ENCODE measurements at regions of chr9 and their contacts with region 1.

Region 1: GRCh38 chr9:128296337-128297220 is 20.5 kb downstream of the SWI5 start:
- DNase-seq: no peak
- H3K4me3 ChIP-seq: no peak overlapping the region
- CTCF ChIP-seq: no peak

Region 2: GRCh38 chr9:127987103-127987614 is 309.4 kb before region 1 on chr9:
- CTCF ChIA-PET with region 1: no interaction called
- POLR2A ChIA-PET with region 1: no interaction called
- DNase-seq: no peak
- H3K4me3 ChIP-seq: no peak overlapping the region
- CTCF ChIP-seq: no peak

Region 3: DNA sequence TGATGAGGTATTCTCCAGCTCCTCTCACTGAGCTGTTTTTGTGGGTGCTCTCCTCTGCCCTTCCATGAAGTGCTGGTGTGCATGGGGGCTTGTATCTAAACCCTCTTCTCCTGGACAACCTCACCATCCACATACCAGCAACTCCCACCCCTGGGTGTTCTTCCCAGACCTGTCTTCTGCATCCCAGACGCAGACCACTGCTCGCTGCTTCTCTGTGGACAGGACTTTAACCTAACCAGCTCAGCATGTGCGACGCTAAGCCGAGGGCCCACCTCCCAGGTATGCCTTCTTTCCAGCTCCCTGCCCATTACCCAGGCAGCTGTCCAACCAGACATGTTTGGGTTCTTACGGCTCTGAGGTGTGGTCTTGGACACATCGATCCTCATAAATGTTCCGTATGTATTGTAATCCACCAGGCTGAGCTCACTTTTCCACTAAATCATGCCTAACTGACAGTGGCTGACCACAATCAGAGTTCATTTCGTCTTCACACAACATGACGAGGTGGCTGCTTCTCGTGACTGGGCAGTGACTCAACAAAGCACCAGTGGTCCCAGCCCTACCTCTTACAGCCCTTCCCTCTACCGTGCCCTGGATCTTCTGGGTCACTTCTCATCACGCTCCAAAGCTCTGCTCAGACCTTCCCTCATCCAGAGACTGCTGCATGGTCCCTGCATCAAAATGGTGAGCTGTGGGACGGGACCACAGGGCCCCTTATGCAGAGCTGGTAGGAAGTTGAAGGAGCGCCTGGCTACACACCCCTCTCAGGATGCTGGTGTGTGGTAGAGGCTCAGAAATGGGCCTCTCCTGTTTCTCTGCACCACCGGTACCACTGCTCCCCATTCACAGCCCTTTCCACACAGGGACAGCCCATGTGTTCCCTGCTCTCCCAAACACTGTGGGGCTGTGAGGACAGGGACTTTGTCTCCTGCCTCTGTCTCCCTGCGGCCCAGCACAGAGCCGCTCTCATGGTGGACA is 159.5 kb before region 1 on chr9:
- CTCF ChIA-PET with region 1: no interaction called
- POLR2A ChIA-PET with region 1: no interaction called
- DNase-seq: no peak
- H3K4me3 ChIP-seq: no peak overlapping the region
- CTCF ChIP-seq: no peak

Region 4: GRCh38 chr9:128276574-128277270 is 19.9 kb before region 1 on chr9:
- CTCF ChIA-PET with region 1: interaction called, 33 read pairs
- POLR2A ChIA-PET with region 1: interaction called, 4 read pairs
- DNase-seq: no peak
- H3K4me3 ChIP-seq: peak overlapping the region; percentile 85
- CTCF ChIP-seq: no peak

Region 5: DNA sequence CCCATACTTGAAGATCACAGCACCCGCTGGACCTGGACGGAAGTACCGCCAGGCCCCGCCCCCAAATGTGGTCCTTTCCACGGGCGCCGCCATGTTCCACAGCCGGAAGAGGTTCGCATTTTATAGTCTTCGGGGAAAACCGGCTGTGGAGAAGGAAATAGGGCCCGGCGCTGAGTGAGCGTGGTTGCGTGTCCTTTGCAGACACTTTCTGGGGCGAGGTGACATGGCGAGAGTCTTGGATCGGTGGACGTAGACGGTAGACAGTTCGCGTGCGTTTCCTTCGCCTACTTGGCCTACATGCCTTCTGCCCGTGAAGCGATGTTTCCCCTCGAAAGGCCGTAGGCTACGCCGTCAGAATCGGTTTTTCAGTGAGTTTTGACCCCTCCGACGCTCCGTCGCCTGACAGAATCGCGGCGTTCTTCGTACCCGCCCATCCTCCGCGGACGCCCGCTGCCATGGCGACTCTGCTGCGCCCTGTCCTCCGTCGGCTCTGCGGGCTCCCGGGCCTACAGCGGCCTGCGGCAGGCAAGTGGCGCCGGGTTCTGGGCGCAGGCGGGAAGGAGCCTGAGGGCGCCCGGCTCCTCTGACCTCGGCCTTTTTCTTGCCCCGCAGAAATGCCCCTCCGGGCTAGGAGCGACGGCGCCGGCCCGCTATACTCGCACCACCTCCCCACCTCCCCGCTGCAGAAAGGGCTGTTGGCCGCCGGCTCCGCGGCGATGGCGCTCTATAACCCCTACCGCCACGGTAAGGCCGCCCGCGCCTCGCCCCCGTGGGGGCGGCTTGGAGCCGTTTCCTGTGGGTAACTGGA is 26.0 kb after region 1 on chr9 and contains the starts of genes COQ4 and TRUB2:
- CTCF ChIA-PET with region 1: interaction called, 18 read pairs
- POLR2A ChIA-PET with region 1: interaction called, 3 read pairs
- DNase-seq: peak; percentile 59
- H3K4me3 ChIP-seq: peak within 1 kb of the TSS; percentile 97
- CTCF ChIP-seq: no peak

Region 6: GRCh38 chr9:128341435-128341849 is 44.9 kb after region 1 on chr9:
- CTCF ChIA-PET with region 1: interaction called, 79 read pairs
- POLR2A ChIA-PET with region 1: interaction called, 3 read pairs
- DNase-seq: no peak
- H3K4me3 ChIP-seq: peak overlapping the region; percentile 82
- CTCF ChIP-seq: peak; percentile 79

Region 7: GRCh38 chr9:128412120-128412790 is 115.7 kb after region 1 on chr9:
- CTCF ChIA-PET with region 1: interaction called, 33 read pairs
- POLR2A ChIA-PET with region 1: interaction called, 3 read pairs
- DNase-seq: no peak
- H3K4me3 ChIP-seq: no peak overlapping the region
- CTCF ChIP-seq: peak; percentile 63

Region 8: GRCh38 chr9:128438343-128439109 is 141.9 kb after region 1 on chr9:
- CTCF ChIA-PET with region 1: interaction called, 14 read pairs
- POLR2A ChIA-PET with region 1: no interaction called
- DNase-seq: no peak
- H3K4me3 ChIP-seq: no peak overlapping the region
- CTCF ChIP-seq: peak; percentile 96

Measured in AG04449 (cell line).